ENCODE measurements at regions of chr13 and their contacts with region 1.

Region 1: GRCh38 chr13:100514788-100515409 is 73.7 kb downstream of the GGACT start:
- DNase-seq: peak; percentile 49
- ATAC-seq: peak; percentile 82
- H3K4me3 Mint-ChIP-seq: no peak overlapping the region
- H3K27ac Mint-ChIP-seq: no peak overlapping the region
- H3K4me1 Mint-ChIP-seq: peaks cover 2% of the 10 kb centered on the region
- H3K27me3 Mint-ChIP-seq: no peaks in the 10 kb centered on the region
- CTCF ChIP-seq: peak; percentile 78

Region 2: DNA sequence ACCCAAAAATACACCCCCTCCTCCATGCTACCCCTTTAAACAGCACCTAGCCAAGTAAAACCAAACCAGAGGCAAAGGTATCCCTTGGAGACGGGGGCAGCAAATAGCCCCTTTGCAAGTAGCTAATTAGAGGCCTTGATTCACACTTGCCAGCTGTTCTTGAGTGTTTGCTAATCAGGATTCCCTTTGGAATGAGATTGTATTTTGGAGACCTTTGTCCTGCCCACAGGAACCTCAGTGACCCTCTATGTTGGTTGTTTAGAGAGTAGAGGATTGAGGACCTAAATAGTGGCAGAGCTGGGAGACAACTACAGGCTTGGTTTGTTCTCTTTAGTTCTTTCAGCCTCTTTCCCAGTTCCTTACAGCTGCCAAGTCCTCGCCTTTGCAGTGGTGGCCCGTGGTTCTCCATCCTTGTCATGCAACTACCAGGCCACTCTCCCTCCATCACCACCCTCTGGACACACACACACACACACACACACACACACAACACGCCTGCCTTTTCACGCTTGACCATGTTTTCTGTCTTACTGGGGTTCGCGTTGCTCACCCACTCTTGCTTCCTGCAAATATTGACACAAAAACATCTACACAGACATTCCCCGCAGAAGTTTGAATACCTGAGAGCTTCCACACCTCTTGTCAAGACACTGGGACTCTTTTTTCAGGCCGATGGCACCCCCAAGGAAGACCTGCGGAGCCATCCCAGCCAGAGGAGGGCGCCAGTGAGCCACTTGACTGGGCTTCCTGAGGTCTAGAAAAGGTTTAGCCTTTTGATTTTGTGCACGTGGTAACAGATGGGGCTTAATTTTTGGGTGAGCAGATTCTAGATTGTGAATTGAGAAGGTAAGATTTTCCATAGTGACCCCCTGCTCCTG is 1127.7 kb before region 1 on chr13:
- CTCF ChIA-PET with region 1: no interaction called
- POLR2A ChIA-PET with region 1: no interaction called
- intact Hi-C with region 1: loop called (anchors 5 kb)
- DNase-seq: peak; percentile 81
- ATAC-seq: peak; percentile 78
- H3K4me3 Mint-ChIP-seq: peak overlapping the region; percentile 12
- H3K27ac Mint-ChIP-seq: peak overlapping the region; percentile 84
- H3K4me1 Mint-ChIP-seq: peaks cover 43% of the 10 kb centered on the region
- H3K27me3 Mint-ChIP-seq: no peaks in the 10 kb centered on the region
- CTCF ChIP-seq: peak; percentile 94

Region 3: GRCh38 chr13:99528547-99528946 is 986.4 kb before region 1 on chr13:
- CTCF ChIA-PET with region 1: interaction called, 4 read pairs
- POLR2A ChIA-PET with region 1: no interaction called
- intact Hi-C with region 1: loop called (anchors 2 kb)
- DNase-seq: no peak
- ATAC-seq: peak; percentile 79
- H3K4me3 Mint-ChIP-seq: no peak overlapping the region
- H3K27ac Mint-ChIP-seq: no peak overlapping the region
- H3K4me1 Mint-ChIP-seq: peaks cover 16% of the 10 kb centered on the region
- H3K27me3 Mint-ChIP-seq: no peaks in the 10 kb centered on the region
- CTCF ChIP-seq: no peak

Region 4: DNA sequence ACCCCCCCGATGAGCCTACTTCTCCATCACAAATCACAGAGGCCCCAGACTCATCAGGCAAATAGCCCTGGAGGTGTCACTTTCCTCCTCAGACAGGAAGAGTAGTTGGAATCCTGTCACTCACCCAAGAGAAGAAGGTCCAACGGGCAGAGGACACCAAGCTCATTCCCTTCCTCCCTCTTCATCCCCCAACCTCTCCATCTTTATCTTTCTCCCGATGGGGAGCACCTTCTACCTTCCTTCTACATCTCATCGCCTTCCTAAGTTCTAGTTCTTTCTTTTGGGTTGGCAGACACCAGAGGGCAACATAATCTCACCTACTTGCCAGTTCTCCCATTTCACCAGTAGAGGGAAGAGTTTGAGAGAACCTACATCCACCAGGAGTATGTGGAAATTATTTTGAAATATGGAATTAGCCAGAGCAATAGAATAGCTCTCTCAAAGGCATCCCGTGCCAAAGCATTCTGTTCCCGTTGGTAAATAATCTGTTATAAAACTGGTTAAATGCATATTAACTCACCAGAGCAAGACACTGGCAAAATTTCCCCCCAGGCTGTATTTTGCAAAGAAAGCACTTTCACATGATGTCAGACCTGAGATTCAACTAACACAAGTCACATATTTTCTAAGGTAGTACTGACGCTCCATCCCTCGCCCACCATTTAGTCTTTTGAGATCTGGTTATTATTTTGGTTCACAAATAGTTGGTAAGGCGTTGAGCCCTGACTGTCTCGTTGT is 598.4 kb before region 1 on chr13:
- CTCF ChIA-PET with region 1: interaction called, 10 read pairs
- POLR2A ChIA-PET with region 1: no interaction called
- intact Hi-C with region 1: loop called (anchors 1 kb)
- DNase-seq: no peak
- ATAC-seq: peak; percentile 56
- H3K4me3 Mint-ChIP-seq: no peak overlapping the region
- H3K27ac Mint-ChIP-seq: no peak overlapping the region
- H3K4me1 Mint-ChIP-seq: peaks cover 1% of the 10 kb centered on the region
- H3K27me3 Mint-ChIP-seq: peaks cover 25% of the 10 kb centered on the region
- CTCF ChIP-seq: peak; percentile 62

Region 5: GRCh38 chr13:100235311-100235901 is 279.5 kb before region 1 on chr13:
- CTCF ChIA-PET with region 1: interaction called, 4 read pairs
- POLR2A ChIA-PET with region 1: no interaction called
- intact Hi-C with region 1: loop called (anchors 1 kb)
- DNase-seq: no peak
- ATAC-seq: peak; percentile 45
- H3K4me3 Mint-ChIP-seq: peak overlapping the region; percentile 3
- H3K27ac Mint-ChIP-seq: no peak overlapping the region
- H3K4me1 Mint-ChIP-seq: peaks cover 7% of the 10 kb centered on the region
- H3K27me3 Mint-ChIP-seq: no peaks in the 10 kb centered on the region
- CTCF ChIP-seq: no peak